ENCODE measurements at regions of chr1 and their contacts with region 1.

Region 1: DNA sequence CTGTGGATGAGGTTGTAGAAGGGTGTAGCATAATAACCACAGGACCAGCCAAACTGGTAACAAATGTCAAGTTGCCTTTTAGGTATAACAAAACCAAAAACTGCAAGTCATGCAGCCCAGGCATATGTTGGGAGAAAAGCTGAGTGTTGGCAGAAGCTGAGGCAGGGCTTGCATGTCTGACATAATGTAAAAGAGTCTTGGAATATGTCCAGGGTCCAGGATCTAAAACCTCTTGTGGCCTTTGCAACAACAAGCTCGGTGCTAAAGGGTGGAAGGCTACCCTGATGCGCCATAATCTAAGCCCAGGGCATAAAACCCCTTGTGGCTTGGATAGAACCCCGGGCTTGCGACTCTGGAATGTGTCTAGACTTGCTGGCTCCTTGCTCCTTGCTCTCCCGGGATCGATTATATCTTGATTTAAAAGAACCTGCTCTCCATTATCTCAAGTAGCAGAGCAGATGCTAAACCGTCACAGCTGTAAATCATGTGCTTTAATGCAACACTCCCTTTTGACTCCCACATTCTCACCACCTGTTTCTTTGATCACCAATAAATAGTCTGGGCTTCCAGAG is 26.5 kb upstream of the SLC35A3 start:
- DNase-seq: no peak
- ATAC-seq: no peak

Region 2: GRCh38 chr1:99886841-99887240 is 56.5 kb before region 1 on chr1:
- intact Hi-C with region 1: loop called (anchors 10 kb)
- DNase-seq: no peak
- ATAC-seq: no peak

Region 3: GRCh38 chr1:99919220-99919619 is 24.1 kb before region 1 on chr1:
- intact Hi-C with region 1: no loop called
- DNase-seq: no peak
- ATAC-seq: peak; percentile 44

Region 4: DNA sequence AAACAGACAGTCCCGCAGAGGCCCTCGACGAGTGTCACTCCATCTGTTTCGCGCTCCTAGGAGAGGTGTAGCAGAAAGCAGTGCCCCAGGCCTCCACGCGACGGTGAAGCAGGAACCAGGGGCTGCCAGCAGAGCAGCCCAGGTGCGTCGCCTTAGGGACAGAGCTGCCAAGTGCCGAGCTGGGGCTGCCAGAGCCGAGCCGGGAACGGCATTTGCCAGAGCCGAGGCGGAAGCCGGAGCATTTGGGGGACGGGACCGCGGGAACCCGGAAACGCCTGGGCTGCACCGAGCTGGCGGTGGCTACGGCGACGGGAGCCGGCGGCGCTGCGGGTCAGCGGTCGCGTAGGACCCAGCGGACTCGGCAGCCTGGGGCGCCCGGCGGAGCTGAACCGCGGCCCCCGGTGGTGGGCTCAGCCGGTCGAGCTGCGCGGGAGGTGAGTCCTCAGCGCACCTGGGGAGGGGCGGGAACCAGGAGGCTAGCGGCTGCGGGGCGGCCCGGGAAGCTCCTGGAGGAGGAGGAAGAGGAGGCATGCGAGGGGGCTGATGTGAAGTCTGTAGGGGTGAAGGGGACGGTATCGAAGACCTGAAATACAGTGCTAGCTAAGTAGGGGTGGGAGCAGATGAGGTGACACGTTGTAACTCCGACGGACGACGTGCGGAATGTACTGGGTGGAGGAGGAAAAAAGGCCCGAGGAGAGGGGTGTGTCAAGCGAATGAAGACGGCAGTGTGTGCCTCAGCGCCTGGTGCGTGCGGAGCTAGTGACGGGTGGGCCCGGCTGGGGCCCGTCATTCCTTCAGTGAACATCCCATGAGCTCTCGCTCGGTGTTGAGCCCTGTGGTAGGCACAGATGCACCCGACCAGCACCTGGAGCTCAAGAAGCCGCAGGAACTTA is 26.7 kb after region 1 on chr1 and contains the start of gene SLC35A3:
- intact Hi-C with region 1: no loop called
- DNase-seq: peak; percentile 85
- ATAC-seq: peak; percentile 95
- total RNA-seq, gene SLC35A3: 23.8 TPM

Region 5: DNA sequence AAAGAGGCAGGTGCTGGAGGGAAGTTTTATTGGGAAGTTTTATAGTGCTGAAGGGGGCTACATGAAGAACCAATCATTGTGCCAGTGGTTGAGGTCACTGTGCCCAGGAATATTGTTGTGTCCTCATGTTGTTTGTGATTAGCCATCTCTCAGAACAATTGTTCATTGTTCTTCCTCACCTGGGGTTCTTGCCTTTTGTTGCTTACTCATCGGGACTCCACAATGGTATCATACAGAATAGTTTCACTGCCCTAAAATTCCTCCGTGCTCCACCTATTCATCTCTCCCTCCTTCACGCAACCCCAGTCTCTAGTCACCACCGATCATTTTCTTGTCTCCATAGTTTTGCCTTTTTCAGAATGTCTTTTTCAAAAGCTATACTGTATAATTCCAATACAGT is 370.1 kb after region 1 on chr1:
- intact Hi-C with region 1: no loop called
- DNase-seq: no peak
- ATAC-seq: no peak

Measured in sciatic nerve (tissue), 2 donors.